ENCODE measurements at regions of chr6 and their contacts with region 1.

Region 1: DNA sequence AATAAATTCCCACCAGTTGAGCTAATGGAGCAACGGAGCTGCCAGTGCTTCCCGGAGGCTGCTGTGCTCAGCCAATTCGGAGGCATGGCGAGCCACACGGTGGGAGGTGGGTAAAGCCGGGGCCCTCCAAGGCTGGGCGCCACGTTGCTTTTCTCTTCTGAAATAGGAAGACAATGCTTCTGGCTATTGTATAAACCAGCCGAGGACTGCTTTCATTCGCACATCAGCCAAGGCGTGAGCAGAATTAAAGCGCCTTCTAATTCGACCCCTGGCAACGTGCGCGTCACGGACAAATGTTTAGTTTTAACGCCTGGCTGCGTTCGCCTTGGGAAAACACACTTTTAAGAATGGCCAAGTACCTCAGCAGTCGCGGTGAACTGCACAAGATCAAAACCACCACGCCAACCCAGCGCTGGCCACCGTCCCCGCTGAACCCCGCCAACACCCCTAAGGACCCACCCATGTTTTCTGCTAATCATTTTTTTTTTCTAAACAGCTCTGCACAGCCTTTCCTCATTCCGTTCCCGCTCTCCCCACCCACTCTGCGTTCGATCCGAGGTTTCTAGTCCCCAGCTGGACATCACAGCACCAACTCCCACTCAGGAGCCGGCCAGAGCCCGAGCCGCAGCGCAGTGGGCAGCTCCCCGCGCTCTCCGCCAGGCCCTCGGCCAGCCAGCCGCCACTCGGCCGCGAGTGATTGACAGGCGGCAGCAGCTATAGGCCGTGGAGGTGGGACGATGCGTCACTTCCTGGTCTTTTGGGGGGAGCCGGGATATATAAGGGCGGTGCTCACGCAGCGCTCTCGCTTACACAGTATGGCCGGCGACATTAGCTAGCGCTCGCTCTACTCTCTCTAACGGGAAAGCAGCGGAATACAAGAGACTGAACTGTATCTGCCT is at the start of gene AMD1:
- DNase-seq: peak; percentile 84
- ATAC-seq: peak; percentile 76
- H3K4me3 Mint-ChIP-seq: peak within 1 kb of the TSS; percentile 99
- H3K27ac Mint-ChIP-seq: peak within 1 kb of the TSS; percentile 99
- H3K4me1 Mint-ChIP-seq: peaks cover 43% of the 10 kb centered on the region
- H3K27me3 Mint-ChIP-seq: no peaks in the 10 kb centered on the region
- CTCF ChIP-seq: no peak
- total RNA-seq, gene AMD1: 61.7 and 65.5 TPM in 2 replicates

Region 2: GRCh38 chr6:110116258-110116657 is 758.0 kb before region 1 on chr6:
- CTCF ChIA-PET with region 1: no interaction called
- POLR2A ChIA-PET with region 1: no interaction called
- intact Hi-C with region 1: no loop called
- DNase-seq: no peak
- ATAC-seq: no peak
- H3K4me3 Mint-ChIP-seq: no peak overlapping the region
- H3K27ac Mint-ChIP-seq: no peak overlapping the region
- H3K4me1 Mint-ChIP-seq: peaks cover 7% of the 10 kb centered on the region
- H3K27me3 Mint-ChIP-seq: no peaks in the 10 kb centered on the region
- CTCF ChIP-seq: no peak

Region 3: DNA sequence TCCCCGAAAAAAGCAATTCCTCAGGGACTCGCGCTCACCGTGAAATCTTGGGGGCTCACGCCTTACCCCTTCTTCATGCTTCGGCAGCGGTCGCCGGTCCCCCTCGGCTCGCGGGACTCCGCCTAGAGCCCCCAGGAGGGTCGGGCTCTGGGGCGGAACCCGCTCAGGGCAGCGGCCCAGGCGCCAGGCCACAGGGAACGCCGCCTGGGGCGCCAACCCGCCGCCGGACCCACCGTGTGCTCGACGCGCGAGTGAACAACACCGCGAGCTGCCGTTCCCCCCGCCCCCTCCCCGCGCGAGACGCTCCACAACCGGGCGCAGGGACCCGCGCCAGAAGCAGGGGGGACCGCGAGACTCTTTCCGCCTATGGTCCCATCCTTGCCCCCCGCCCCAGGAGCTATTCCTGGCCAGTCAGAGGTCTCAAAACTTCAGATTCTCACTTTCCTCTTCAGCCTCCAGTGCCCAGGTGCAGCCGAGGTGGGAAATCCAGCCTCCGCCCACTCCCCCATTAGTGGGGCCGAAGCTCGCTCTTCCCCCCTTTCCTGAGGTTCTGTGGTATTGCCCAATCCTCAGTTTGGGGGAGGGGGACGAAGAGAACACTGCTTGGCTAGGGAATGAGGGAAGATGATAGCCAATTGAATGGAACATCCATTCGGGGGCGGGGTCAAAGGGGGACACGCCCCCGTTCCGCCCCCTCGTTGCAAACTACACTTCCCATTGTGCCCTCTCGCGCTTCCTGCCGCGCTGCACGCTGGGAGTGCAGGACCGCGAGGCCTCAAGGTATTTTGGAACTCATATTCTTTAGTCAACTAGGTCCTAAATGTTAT is 694.6 kb before region 1 on chr6 and contains the start of gene WASF1:
- CTCF ChIA-PET with region 1: no interaction called
- POLR2A ChIA-PET with region 1: no interaction called
- intact Hi-C with region 1: loop called (anchors 2 kb)
- DNase-seq: peak; percentile 92
- ATAC-seq: peak; percentile 80
- H3K4me3 Mint-ChIP-seq: no peak within 1 kb of the TSS
- H3K27ac Mint-ChIP-seq: peak within 1 kb of the TSS; percentile 86
- H3K4me1 Mint-ChIP-seq: peaks cover 7% of the 10 kb centered on the region
- H3K27me3 Mint-ChIP-seq: no peaks in the 10 kb centered on the region
- CTCF ChIP-seq: no peak
- total RNA-seq, gene WASF1: 5.1 and 6.2 TPM in 2 replicates

Region 4: GRCh38 chr6:110784610-110784979 is 89.6 kb before region 1 on chr6:
- CTCF ChIA-PET with region 1: no interaction called
- POLR2A ChIA-PET with region 1: interaction called, 12 read pairs
- intact Hi-C with region 1: loop called (anchors 1 kb)
- DNase-seq: no peak
- ATAC-seq: no peak
- H3K4me3 Mint-ChIP-seq: no peak overlapping the region
- H3K27ac Mint-ChIP-seq: peak overlapping the region; percentile 61
- H3K4me1 Mint-ChIP-seq: peaks cover 38% of the 10 kb centered on the region
- H3K27me3 Mint-ChIP-seq: no peaks in the 10 kb centered on the region
- CTCF ChIP-seq: no peak

Region 5: GRCh38 chr6:110949679-110950285 is 75.6 kb after region 1 on chr6:
- CTCF ChIA-PET with region 1: interaction called, 10 read pairs
- POLR2A ChIA-PET with region 1: interaction called, 33 read pairs
- intact Hi-C with region 1: loop called (anchors 1 kb)
- DNase-seq: no peak
- ATAC-seq: no peak
- H3K4me3 Mint-ChIP-seq: no peak overlapping the region
- H3K27ac Mint-ChIP-seq: no peak overlapping the region
- H3K4me1 Mint-ChIP-seq: peaks cover 1% of the 10 kb centered on the region
- H3K27me3 Mint-ChIP-seq: no peaks in the 10 kb centered on the region
- CTCF ChIP-seq: no peak

Region 6: GRCh38 chr6:111259089-111259831 is 385.0 kb after region 1 on chr6:
- CTCF ChIA-PET with region 1: no interaction called
- POLR2A ChIA-PET with region 1: interaction called, 3 read pairs
- intact Hi-C with region 1: loop called (anchors 1 kb)
- DNase-seq: peak; percentile 97
- ATAC-seq: peak; percentile 93
- H3K4me3 Mint-ChIP-seq: peak overlapping the region; percentile 84
- H3K27ac Mint-ChIP-seq: peak overlapping the region; percentile 87
- H3K4me1 Mint-ChIP-seq: peaks cover 30% of the 10 kb centered on the region
- H3K27me3 Mint-ChIP-seq: no peaks in the 10 kb centered on the region
- CTCF ChIP-seq: peak; percentile 89